ENCODE measurements at regions of chr20 and their contacts with region 1.

Region 1: GRCh38 chr20:10034717-10035571 is at the start of gene ANKEF1:
- DNase-seq: peak; percentile 62 to 88 (median 81)
- ATAC-seq: peak; percentile 99
- H3K4me3 ChIP-seq: peak within 1 kb of the TSS; percentile 87
- H3K4me3 Mint-ChIP-seq: peak within 1 kb of the TSS; percentile 60 to 88 (median 79)
- H3K27ac ChIP-seq: peak within 1 kb of the TSS; percentile 71
- H3K27ac Mint-ChIP-seq: peak within 1 kb of the TSS; percentile 21 to 88 (median 73)
- H3K4me1 ChIP-seq: peaks cover 8 to 12% of the 10 kb centered on the region in 2 donors
- H3K4me1 Mint-ChIP-seq: peaks cover 6 to 27% (median 13%) of the 10 kb centered on the region in 7 donors
- H3K27me3 ChIP-seq: no peaks in the 10 kb centered on the region
- H3K27me3 Mint-ChIP-seq: peaks cover 6 to 11% (median 10%) of the 10 kb centered on the region in 5 donors
- total RNA-seq, gene ANKEF1: 1.5 to 6.7 (median 2.9) TPM

Region 2: GRCh38 chr20:9689041-9689440 is 345.9 kb before region 1 on chr20:
- CTCF ChIA-PET with region 1: no interaction called
- POLR2A ChIA-PET with region 1: no interaction called
- intact Hi-C with region 1: no loop called
- DNase-seq: no peak
- ATAC-seq: no peak
- H3K4me3 ChIP-seq: no peak overlapping the region
- H3K4me3 Mint-ChIP-seq: no peak overlapping the region
- H3K27ac ChIP-seq: no peak overlapping the region
- H3K27ac Mint-ChIP-seq: no peak overlapping the region
- H3K4me1 ChIP-seq: no peaks in the 10 kb centered on the region
- H3K4me1 Mint-ChIP-seq: no peaks in the 10 kb centered on the region
- H3K27me3 ChIP-seq: no peaks in the 10 kb centered on the region
- H3K27me3 Mint-ChIP-seq: peaks cover 0 to 5% (median 0%) of the 10 kb centered on the region in 5 donors

Region 3: GRCh38 chr20:10219452-10219791 is 184.5 kb after region 1 on chr20:
- CTCF ChIA-PET with region 1: no interaction called
- POLR2A ChIA-PET with region 1: no interaction called
- intact Hi-C with region 1: loop called in 1 of 2 experiments (anchors 10 kb)
- DNase-seq: peak; percentile 25 to 80 (median 51)
- ATAC-seq: peak; percentile 90
- H3K4me3 ChIP-seq: no peak overlapping the region
- H3K4me3 Mint-ChIP-seq: peak overlapping the region in 7 of 10 donors; percentile 20 to 73 (median 67)
- H3K27ac ChIP-seq: no peak overlapping the region
- H3K27ac Mint-ChIP-seq: no peak overlapping the region
- H3K4me1 ChIP-seq: no peaks in the 10 kb centered on the region
- H3K4me1 Mint-ChIP-seq: peaks cover 5 to 25% (median 16%) of the 10 kb centered on the region in 7 donors
- H3K27me3 ChIP-seq: peaks cover 0 to 4% of the 10 kb centered on the region in 2 donors
- H3K27me3 Mint-ChIP-seq: peaks cover 31 to 84% (median 65%) of the 10 kb centered on the region in 5 donors

Region 4: DNA sequence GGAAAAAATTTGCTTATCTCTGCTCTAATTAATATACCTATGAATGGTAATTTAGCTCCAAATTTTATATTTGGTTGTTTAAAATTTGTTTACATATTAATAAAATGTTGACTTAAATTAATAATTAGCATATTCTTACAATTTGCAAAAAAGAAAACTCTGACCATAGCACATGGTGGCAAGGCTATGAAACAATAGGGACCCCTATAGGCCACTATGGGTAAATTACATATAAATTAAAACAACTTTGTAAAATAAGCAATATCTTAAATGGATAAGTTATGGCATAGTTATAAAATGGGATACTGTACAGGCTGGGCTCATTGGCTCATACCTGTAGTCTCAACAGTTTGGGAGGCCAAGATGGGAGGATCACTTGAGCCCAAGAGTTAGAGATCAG is 323.0 kb after region 1 on chr20:
- CTCF ChIA-PET with region 1: no interaction called
- POLR2A ChIA-PET with region 1: no interaction called
- intact Hi-C with region 1: loop called in 1 of 2 experiments (anchors 10 kb)
- DNase-seq: no peak
- ATAC-seq: no peak
- H3K4me3 ChIP-seq: no peak overlapping the region
- H3K4me3 Mint-ChIP-seq: no peak overlapping the region
- H3K27ac ChIP-seq: no peak overlapping the region
- H3K27ac Mint-ChIP-seq: no peak overlapping the region
- H3K4me1 ChIP-seq: no peaks in the 10 kb centered on the region
- H3K4me1 Mint-ChIP-seq: peaks cover 0 to 4% (median 0%) of the 10 kb centered on the region in 7 donors
- H3K27me3 ChIP-seq: no peaks in the 10 kb centered on the region
- H3K27me3 Mint-ChIP-seq: peaks cover 0 to 10% (median 5%) of the 10 kb centered on the region in 5 donors

Measured in naive thymus-derived CD4-positive, alpha-beta T cell (primary cell).